ENCODE measurements at regions of chr5 and their contacts with region 1.

Region 1: GRCh38 chr5:41978676-41979075 is 53.6 kb downstream of the FBXO4 start:
- DNase-seq: no peak
- H3K4me3 ChIP-seq: no peak overlapping the region
- H3K4me3 Mint-ChIP-seq: no peak overlapping the region
- H3K27ac ChIP-seq: no peak overlapping the region
- H3K27ac Mint-ChIP-seq: no peak overlapping the region
- H3K4me1 ChIP-seq: no peaks in the 10 kb centered on the region
- H3K4me1 Mint-ChIP-seq: no peaks in the 10 kb centered on the region
- H3K27me3 ChIP-seq: no peaks in the 10 kb centered on the region
- H3K27me3 Mint-ChIP-seq: no peaks in the 10 kb centered on the region

Region 2: GRCh38 chr5:40866291-40866690 is 1112.4 kb before region 1 on chr5:
- CTCF ChIA-PET with region 1: no interaction called
- POLR2A ChIA-PET with region 1: interaction called, 12 read pairs
- DNase-seq: no peak
- H3K4me3 ChIP-seq: no peak overlapping the region
- H3K4me3 Mint-ChIP-seq: no peak overlapping the region
- H3K27ac ChIP-seq: no peak overlapping the region
- H3K27ac Mint-ChIP-seq: no peak overlapping the region
- H3K4me1 ChIP-seq: no peaks in the 10 kb centered on the region
- H3K4me1 Mint-ChIP-seq: no peaks in the 10 kb centered on the region
- H3K27me3 ChIP-seq: no peaks in the 10 kb centered on the region
- H3K27me3 Mint-ChIP-seq: peaks cover 2 to 6% of the 10 kb centered on the region in 2 donors

Region 3: GRCh38 chr5:41641621-41642020 is 337.1 kb before region 1 on chr5:
- CTCF ChIA-PET with region 1: no interaction called
- POLR2A ChIA-PET with region 1: no interaction called
- DNase-seq: no peak
- H3K4me3 ChIP-seq: no peak overlapping the region
- H3K4me3 Mint-ChIP-seq: no peak overlapping the region
- H3K27ac ChIP-seq: no peak overlapping the region
- H3K27ac Mint-ChIP-seq: no peak overlapping the region
- H3K4me1 ChIP-seq: no peaks in the 10 kb centered on the region
- H3K4me1 Mint-ChIP-seq: no peaks in the 10 kb centered on the region
- H3K27me3 ChIP-seq: no peaks in the 10 kb centered on the region
- H3K27me3 Mint-ChIP-seq: no peaks in the 10 kb centered on the region

Region 4: GRCh38 chr5:41967852-41968719 is 10.6 kb before region 1 on chr5:
- CTCF ChIA-PET with region 1: no interaction called
- POLR2A ChIA-PET with region 1: no interaction called
- DNase-seq: no peak
- H3K4me3 ChIP-seq: no peak overlapping the region
- H3K4me3 Mint-ChIP-seq: no peak overlapping the region
- H3K27ac ChIP-seq: no peak overlapping the region
- H3K27ac Mint-ChIP-seq: no peak overlapping the region
- H3K4me1 ChIP-seq: no peaks in the 10 kb centered on the region
- H3K4me1 Mint-ChIP-seq: no peaks in the 10 kb centered on the region
- H3K27me3 ChIP-seq: no peaks in the 10 kb centered on the region
- H3K27me3 Mint-ChIP-seq: peaks cover 5 to 20% of the 10 kb centered on the region in 2 donors

Region 5: DNA sequence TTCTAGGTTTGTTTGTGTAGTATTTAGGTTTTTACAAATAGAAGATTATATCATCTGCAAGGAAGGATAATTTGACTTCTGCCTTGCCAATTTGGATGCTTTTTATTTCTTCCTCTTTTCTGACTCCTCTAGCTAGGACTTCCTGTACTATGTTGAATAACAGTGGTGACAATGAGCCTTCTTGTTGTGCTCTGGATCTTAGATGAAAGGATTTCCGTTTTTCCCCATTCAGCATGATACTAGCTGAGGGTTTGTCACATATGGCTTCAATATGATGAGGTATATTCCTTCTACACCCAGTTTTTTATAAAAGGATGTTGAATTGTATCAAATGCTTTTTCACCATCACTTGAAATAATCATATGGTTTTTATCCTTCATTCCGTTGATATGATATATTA is 47.8 kb after region 1 on chr5:
- CTCF ChIA-PET with region 1: no interaction called
- POLR2A ChIA-PET with region 1: no interaction called
- DNase-seq: no peak
- H3K4me3 ChIP-seq: no peak overlapping the region
- H3K4me3 Mint-ChIP-seq: no peak overlapping the region
- H3K27ac ChIP-seq: no peak overlapping the region
- H3K27ac Mint-ChIP-seq: no peak overlapping the region
- H3K4me1 ChIP-seq: no peaks in the 10 kb centered on the region
- H3K4me1 Mint-ChIP-seq: no peaks in the 10 kb centered on the region
- H3K27me3 ChIP-seq: no peaks in the 10 kb centered on the region
- H3K27me3 Mint-ChIP-seq: peaks cover 12 to 34% of the 10 kb centered on the region in 2 donors

Region 6: GRCh38 chr5:43085453-43085852 is 1106.8 kb after region 1 on chr5:
- CTCF ChIA-PET with region 1: no interaction called
- POLR2A ChIA-PET with region 1: no interaction called
- DNase-seq: no peak
- H3K4me3 ChIP-seq: no peak overlapping the region
- H3K4me3 Mint-ChIP-seq: no peak overlapping the region
- H3K27ac ChIP-seq: no peak overlapping the region
- H3K27ac Mint-ChIP-seq: peak overlapping the region in 1 of 8 donors; percentile 41
- H3K4me1 ChIP-seq: no peaks in the 10 kb centered on the region
- H3K4me1 Mint-ChIP-seq: no peaks in the 10 kb centered on the region
- H3K27me3 ChIP-seq: no peaks in the 10 kb centered on the region
- H3K27me3 Mint-ChIP-seq: no peaks in the 10 kb centered on the region

Measured in CD8-positive, alpha-beta memory T cell (primary cell).